Aorta (tissue), 5 donors: ENCODE measurements at regions of chr16 and their contacts with region 1.

Region 1: DNA sequence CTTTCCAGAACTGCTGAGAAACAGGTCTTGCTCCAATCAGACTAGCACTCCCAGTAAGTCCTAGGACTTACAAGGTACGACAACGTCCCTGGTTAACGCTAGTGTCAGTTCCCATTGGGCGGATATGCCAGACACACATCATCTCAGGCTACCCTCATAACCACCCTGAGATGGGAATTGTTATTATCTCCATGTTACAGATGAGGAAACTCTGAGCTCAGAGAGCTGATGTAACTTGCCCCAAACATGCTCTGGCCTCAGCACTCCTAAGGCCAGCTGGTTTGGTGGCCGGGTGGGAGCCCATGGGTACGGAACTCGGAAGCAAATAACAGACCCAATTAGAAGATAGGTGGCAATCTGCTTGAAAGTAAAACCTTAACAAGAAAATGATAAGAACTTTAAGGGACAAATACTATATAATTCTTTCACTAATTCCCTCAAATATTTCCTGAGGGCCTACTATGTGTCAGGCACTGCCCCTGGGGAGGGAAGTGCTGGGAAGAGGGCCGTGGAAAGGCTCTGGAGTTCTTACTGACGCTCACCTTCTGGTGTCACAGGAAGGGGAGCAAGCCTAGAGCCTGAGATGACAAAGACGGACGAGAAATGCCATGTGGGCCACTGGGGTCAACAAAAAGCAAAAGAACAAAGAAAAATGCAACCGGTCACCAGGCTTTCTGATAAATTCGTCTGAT is 6.9 kb downstream of the CREBBP start:
- DNase-seq: no peak
- ATAC-seq: no peak
- H3K4me3 ChIP-seq: no peak overlapping the region
- H3K27ac ChIP-seq: peak overlapping the region; percentile 30 to 73
- H3K4me1 ChIP-seq: peaks cover 0 to 11% of the 10 kb centered on the region in 2 donors
- H3K27me3 ChIP-seq: no peaks in the 10 kb centered on the region

Region 2: DNA sequence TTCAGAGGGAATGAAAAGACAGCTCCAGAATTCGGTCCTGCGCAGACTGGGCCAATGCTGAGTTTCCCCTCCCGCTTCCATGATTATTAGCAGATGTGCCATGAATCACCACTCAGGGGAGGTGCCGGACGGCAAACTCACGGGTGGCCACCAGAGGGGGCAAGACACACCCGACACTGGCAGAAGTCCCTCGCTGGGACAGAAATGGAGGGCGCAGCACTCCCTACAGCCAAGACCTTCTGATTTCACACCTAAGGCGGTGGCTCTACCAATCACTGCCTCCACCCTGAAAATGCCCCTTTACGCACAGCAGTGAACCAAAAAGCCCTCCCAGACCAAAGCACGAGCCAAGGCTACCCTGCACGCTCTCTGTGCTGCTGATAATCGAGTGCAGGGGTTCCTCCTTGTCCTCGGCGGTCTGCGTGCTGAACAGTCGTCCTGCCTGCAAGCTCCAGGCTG is 183.1 kb before region 1 on chr16:
- intact Hi-C with region 1: loop called in 1 of 2 experiments (anchors 5 kb)
- DNase-seq: peak; percentile 93 to 97
- ATAC-seq: peak; percentile 96
- H3K4me3 ChIP-seq: no peak overlapping the region
- H3K27ac ChIP-seq: peak overlapping the region in 1 of 2 donors; percentile 10
- H3K4me1 ChIP-seq: no peaks in the 10 kb centered on the region
- H3K27me3 ChIP-seq: no peaks in the 10 kb centered on the region

Region 3: DNA sequence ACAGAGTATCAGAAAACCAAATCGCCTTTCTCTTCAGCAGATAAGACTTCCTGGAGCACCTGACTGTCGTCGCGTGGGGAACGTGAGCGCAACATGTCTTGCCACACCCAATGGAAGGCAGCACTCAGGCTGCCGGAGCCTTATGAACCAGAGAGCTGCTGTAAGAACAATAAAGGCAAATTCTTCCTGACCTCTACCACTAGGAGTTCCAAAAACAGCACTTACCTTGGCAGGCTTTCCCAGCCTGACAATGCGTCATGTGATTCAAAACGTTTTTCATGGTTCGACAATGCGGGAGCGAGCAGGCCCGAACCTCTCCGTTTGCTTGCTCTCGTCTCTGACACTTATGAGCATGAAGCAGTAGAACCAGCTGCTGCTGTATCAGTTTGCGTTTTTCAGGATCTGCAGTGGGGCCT is 80.5 kb before region 1 on chr16:
- intact Hi-C with region 1: loop called (anchors 5 kb)
- DNase-seq: peak in 1 of 2 donors; percentile 56
- ATAC-seq: peak; percentile 79
- H3K4me3 ChIP-seq: no peak overlapping the region
- H3K27ac ChIP-seq: peak overlapping the region in 1 of 2 donors; percentile 55
- H3K4me1 ChIP-seq: peaks cover 2 to 5% of the 10 kb centered on the region in 2 donors
- H3K27me3 ChIP-seq: no peaks in the 10 kb centered on the region

Region 4: DNA sequence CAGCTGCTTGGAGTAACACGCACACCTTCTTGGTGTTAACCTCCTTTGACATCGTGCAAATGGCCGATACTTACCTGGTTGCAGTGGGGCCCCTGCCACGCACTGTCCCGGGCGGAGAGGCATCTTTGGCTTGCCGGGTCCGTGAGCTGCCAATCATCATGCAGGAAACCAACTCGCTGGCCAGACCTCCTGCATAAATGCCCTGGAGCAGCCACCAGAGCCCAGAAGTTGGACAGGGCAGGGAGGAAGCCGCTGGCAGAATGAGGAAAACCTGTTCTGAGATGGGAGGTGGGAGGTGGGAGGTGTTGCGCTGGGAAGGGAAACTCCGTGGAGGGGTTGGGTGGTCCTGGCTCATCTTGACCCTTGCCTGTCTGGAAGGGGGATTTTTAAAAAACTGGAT is 48.6 kb after region 1 on chr16:
- intact Hi-C with region 1: no loop called
- DNase-seq: no peak
- ATAC-seq: no peak
- H3K4me3 ChIP-seq: no peak overlapping the region
- H3K27ac ChIP-seq: no peak overlapping the region
- H3K4me1 ChIP-seq: no peaks in the 10 kb centered on the region
- H3K27me3 ChIP-seq: no peaks in the 10 kb centered on the region